Common myeloid progenitor, CD34-positive (primary cell): ENCODE measurements at regions of chr20 and their contacts with region 1.

Region 1: DNA sequence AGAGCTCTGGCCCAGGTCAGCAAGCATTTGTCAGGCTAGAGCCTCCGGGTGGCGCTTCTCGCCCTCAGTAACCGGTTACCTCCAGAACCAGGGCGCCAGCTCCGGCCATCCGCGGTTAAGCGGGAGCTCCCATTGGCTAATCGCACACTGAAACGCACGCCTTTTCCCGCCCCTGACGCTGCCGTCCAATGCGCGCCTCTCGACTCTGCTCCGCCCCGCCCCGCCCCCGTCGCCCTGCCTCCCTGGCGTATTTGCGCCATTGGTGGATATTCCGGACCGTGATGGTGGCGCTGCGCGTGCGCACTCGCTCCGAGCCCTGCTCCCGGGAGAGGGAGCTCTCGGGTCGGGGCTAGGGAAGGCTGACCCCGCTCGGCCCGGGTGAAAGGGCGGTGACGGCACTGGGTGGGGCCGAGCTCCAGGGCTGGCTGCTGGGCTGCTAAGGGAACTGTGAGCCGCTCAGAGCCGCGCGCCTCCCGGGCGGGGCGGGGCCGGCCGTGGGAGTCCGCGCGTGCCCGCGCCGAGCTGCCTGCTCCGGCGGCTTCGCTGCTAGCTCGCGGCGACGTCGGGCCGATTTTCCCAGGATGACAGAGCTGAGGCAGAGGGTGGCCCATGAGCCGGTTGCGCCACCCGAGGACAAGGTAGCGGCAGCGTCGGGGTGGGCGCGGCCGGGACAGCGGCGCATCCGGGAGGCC is at the start of gene CDS2:
- DNase-seq: peak; percentile 98 to 99 (median 99)
- H3K4me3 ChIP-seq: peak within 1 kb of the TSS; percentile 78 to 98 (median 88)
- H3K27ac ChIP-seq: peak within 1 kb of the TSS; percentile 82 to 92
- H3K4me1 ChIP-seq: peaks cover 8 to 23% (median 17%) of the 10 kb centered on the region in 4 experiments
- H3K27me3 ChIP-seq: no peaks in the 10 kb centered on the region

Region 2: GRCh38 chr20:5113615-5113986 is 13.1 kb before region 1 on chr20:
- CTCF ChIA-PET with region 1: no interaction called
- POLR2A ChIA-PET with region 1: no interaction called
- DNase-seq: no peak
- H3K4me3 ChIP-seq: peak overlapping the region; percentile 70 to 100 (median 95)
- H3K27ac ChIP-seq: peak overlapping the region; percentile 88 to 95
- H3K4me1 ChIP-seq: peaks cover 17 to 52% (median 28%) of the 10 kb centered on the region in 4 experiments
- H3K27me3 ChIP-seq: no peaks in the 10 kb centered on the region

Region 3: DNA sequence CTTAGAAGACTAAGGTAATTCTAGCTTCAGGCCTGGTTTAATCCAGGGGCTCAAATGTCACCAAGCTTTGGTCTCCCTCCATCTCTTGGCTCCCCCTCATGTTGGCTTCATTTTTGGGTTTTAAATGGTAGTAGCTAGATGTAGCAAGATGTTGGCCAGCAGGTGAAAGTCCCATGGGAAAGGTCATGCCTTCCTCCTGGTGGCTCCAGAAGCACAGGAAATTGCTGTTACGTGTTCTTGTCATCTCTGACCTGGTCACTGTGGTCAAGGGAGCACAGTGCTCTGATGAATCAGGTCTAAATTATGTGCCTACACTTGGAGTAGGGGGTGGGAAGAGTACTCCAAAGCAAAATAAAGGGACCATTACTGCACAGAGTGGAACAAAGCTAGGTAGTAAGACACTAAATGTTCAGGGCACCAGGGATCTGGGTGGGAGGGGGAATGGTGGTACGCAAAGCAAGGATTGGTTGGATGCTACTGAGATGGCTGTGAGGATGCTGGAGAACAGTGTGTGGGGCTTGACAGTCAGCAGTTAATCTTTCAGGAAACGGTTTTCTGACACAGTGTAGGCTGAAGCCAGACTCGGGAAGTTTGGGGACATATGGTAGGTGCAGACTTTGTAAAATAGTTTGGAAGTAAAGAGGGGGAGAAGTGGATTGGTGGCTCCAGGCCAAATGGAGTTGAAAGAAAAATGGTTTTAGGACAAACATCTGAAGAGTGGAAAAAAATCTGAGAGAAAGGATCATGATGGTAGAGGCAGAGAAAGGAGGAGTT is 30.2 kb after region 1 on chr20:
- CTCF ChIA-PET with region 1: interaction called, 14 read pairs
- POLR2A ChIA-PET with region 1: no interaction called
- DNase-seq: no peak
- H3K4me3 ChIP-seq: peak overlapping the region in 1 of 7 experiments; percentile 43
- H3K27ac ChIP-seq: no peak overlapping the region
- H3K4me1 ChIP-seq: peaks cover 0 to 29% (median 2%) of the 10 kb centered on the region in 4 experiments
- H3K27me3 ChIP-seq: no peaks in the 10 kb centered on the region

Region 4: DNA sequence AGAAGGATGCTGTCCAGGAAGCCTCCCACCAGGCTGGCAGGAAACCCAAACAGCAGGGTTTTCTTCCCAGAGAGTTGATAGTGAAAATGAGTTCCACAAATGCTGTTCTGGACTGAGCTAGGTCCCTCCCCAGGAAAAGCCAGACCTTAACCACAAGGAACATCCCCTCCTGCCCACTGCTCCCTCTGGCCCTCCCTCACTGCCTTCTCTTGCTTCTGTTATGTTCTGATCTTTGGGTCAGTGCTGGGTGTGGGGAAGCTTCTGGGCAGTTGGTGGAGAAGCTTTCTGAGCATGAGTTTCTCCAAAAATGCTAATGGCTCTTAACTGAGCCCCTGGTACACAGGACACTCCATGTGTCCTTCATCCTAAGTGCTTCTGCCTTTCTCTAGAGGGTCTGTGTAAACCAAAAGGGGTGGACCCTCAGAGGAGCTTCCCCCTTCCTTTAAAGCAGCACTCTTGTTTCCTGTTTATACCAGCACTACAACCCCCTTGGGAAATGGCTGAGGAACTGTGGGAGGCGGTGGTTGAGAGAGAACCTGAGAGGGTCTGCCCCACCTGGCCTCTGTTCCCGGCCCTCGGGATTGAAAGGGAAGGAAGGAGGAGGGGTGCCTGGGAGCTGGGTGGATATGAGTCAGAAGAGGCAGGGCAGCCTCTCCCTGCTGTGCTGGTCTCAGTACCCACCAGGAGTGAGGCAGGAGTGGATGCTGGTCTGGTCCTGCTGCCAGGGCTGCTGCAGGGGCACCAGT is 42.2 kb after region 1 on chr20:
- CTCF ChIA-PET with region 1: interaction called, 15 read pairs
- POLR2A ChIA-PET with region 1: no interaction called
- DNase-seq: peak; percentile 27 to 72 (median 67)
- H3K4me3 ChIP-seq: peak overlapping the region in 5 of 7 experiments; percentile 20 to 51 (median 48)
- H3K27ac ChIP-seq: peak overlapping the region in 1 of 2 experiments; percentile 50
- H3K4me1 ChIP-seq: peaks cover 11 to 66% (median 35%) of the 10 kb centered on the region in 4 experiments
- H3K27me3 ChIP-seq: no peaks in the 10 kb centered on the region

Region 5: DNA sequence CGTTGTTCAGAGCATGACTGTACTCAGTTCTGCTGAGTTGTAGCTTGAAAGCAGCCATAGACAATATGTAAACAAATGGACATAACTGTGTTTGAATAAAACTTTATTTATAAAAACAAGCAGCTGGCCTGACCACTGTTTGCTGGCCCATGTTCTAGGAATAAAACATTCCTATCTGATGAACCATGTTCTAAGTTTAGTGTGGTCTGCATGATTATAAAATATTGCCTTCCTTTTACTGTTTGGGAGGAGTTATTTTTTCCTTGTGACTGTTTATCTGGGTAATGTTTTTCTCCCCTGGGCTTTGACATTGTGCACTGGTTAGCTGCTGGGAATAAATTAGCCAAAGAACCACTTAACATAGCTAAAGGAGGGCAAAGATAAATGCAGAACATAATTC is 55.3 kb after region 1 on chr20:
- CTCF ChIA-PET with region 1: interaction called, 12 read pairs
- POLR2A ChIA-PET with region 1: no interaction called
- DNase-seq: no peak
- H3K4me3 ChIP-seq: no peak overlapping the region
- H3K27ac ChIP-seq: no peak overlapping the region
- H3K4me1 ChIP-seq: no peaks in the 10 kb centered on the region
- H3K27me3 ChIP-seq: no peaks in the 10 kb centered on the region

Region 6: DNA sequence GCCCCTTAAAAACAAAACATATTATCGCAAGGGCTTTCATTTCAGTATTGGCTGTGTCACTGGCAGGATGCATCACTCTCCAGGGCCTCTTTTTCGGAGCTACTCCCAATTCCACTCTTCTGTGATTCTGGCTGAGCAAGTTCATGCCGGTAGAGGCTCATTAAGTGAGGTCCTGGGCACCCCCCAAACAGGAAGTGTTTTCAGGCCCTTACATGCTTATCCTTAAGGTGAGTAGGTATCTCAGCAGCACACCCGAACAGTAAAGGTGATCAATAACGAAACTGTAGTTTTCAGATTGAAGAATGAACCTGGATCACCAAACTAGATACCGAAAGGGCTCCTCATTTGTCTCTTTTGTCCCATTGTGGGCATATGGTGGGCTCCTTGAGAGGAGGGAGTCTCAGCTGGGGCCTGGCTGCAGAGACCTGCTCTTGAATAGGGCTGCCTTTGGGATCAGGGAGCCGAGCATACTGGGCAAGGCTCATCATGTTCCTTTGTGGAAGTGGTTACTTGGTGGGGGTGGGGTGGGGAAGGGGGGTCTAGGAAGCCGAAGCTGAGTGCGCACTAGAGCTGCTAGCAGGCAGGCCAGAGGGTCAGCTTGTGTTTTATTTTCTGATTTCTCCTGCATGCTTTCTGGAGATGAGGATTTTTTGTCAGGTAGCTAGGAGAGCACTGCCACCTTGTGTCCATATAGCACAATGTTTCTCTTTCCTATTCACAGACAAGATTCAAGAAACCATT is 65.3 kb after region 1 on chr20:
- CTCF ChIA-PET with region 1: interaction called, 95 read pairs
- POLR2A ChIA-PET with region 1: interaction called, 15 read pairs
- DNase-seq: peak; percentile 77 to 88 (median 83)
- H3K4me3 ChIP-seq: no peak overlapping the region
- H3K27ac ChIP-seq: no peak overlapping the region
- H3K4me1 ChIP-seq: peaks cover 0 to 5% (median 0%) of the 10 kb centered on the region in 4 experiments
- H3K27me3 ChIP-seq: no peaks in the 10 kb centered on the region

Region 7: GRCh38 chr20:5205348-5206210 is 78.9 kb after region 1 on chr20:
- CTCF ChIA-PET with region 1: interaction called, 20 read pairs
- POLR2A ChIA-PET with region 1: no interaction called
- DNase-seq: peak; percentile 69 to 81 (median 75)
- H3K4me3 ChIP-seq: no peak overlapping the region
- H3K27ac ChIP-seq: no peak overlapping the region
- H3K4me1 ChIP-seq: no peaks in the 10 kb centered on the region
- H3K27me3 ChIP-seq: no peaks in the 10 kb centered on the region

Region 8: GRCh38 chr20:5230544-5230943 is 103.9 kb after region 1 on chr20:
- CTCF ChIA-PET with region 1: no interaction called
- POLR2A ChIA-PET with region 1: no interaction called
- DNase-seq: no peak
- H3K4me3 ChIP-seq: no peak overlapping the region
- H3K27ac ChIP-seq: no peak overlapping the region
- H3K4me1 ChIP-seq: peaks cover 0 to 9% (median 3%) of the 10 kb centered on the region in 4 experiments
- H3K27me3 ChIP-seq: peaks cover 0 to 12% (median 2%) of the 10 kb centered on the region in 5 experiments

Region 9: DNA sequence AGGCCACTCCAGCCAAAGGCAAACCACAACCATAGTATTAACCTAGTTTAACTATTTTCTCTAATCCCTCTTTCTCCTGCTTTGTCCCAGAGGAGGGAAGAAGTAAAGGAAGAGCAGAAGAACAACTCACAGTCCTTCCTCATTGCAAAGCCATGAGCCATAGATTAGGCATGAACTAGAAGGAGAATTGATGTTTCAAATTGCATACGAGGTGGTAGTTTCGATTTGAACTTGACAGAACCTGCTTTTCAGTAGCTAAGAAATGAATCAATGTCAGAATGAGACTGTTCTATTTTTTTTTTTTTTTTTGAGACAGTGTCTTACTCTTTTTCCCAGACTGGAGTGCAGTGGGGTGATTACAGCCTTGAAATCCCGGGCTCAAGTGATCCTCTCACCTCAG is 141.8 kb after region 1 on chr20:
- CTCF ChIA-PET with region 1: no interaction called
- POLR2A ChIA-PET with region 1: no interaction called
- DNase-seq: no peak
- H3K4me3 ChIP-seq: no peak overlapping the region
- H3K27ac ChIP-seq: no peak overlapping the region
- H3K4me1 ChIP-seq: no peaks in the 10 kb centered on the region
- H3K27me3 ChIP-seq: peaks cover 0 to 10% (median 8%) of the 10 kb centered on the region in 5 experiments